Left colon (tissue), 2 donors: ENCODE measurements at regions of chr14 and their contacts with region 1.

Region 1: DNA sequence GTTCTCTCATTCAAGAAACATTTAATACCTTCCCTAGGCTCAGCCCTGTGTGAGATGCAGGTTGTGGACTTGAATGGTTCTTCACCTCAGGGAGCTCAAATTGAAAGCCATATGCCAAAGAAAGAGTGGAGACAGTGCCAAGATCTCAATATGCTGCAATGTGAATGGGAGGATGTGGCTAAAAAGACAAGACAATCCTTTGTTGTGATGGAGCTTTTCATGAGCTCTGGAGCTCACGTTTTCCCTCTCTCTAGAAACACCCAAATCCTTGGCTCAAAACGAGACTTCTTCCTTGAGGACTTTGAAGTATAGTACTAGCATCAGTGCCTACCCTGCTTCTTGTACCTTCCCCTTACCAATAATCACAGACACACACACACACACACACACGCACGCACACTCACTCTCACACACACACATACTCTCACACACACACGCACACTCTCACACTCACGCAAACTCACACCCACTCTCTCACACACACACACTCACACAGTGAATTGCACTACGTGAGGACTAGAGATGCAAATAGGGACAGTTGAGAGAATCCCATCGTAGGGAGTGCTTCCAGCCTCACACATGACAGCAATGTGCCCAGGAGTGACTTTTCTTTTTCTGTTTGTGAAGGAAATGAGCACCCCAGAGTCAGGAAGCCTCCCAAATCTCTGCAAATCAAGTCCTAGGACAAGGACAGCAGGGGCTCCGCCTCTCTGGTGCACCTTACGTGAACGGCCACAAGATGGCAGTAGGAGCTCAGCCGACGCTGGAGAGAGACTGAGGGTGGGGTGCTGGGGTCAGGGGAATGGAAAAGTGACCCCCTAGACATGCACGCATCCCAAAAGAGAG is 231.4 kb downstream of the PCNX1 start:
- DNase-seq: peak in 1 of 2 donors; percentile 66
- ATAC-seq: peak; percentile 84

Region 2: GRCh38 chr14:71290960-71291466 is 152.3 kb after region 1 on chr14:
- intact Hi-C with region 1: no loop called
- DNase-seq: no peak
- ATAC-seq: peak; percentile 51

Region 3: DNA sequence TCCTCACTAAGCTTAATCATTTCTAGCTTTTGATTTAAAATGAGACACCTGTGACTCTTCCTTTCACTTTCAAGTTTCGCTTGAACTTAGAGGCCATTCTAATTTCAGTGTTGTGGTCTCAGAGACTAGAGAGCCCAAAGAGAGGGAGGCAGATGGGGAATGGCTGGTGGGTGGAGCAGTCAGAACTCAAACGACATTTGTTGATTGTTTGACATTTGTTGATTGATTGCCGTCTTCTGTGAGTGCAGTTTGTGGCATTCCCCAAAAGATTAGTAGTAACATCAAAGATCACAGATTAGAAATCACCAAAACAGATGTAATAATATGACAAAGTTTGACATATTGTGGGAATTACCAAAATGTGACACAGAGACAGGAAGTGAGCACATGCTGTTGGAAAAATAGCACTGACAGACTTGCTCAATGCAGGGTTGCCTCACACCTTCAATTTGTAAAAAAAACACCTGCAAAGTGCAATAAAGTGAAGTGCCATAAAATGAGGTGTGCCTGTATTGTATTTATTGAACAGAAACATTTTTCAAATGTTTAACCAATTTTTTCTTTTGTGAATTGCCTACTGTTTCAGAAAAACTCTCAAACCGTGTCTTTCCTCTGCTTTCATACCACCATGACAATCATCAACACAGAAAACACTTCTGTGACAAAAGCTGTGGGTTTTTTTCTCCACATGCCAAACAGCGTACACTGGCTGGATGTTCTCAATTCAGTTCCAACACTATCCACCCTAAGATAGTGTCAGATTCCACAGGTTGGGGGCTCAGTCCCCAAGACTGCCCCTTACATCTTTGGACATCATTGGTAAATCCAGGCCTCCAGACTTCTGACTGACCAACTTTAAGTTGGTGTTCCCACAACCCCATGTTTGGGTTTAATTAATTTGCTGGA is 417.2 kb after region 1 on chr14:
- intact Hi-C with region 1: no loop called
- DNase-seq: peak; percentile 33 to 42
- ATAC-seq: peak; percentile 93

Region 4: GRCh38 chr14:71753126-71753830 is 614.6 kb after region 1 on chr14:
- intact Hi-C with region 1: loop called (anchors 5 to 10 kb)
- DNase-seq: peak; percentile 75 to 92
- ATAC-seq: peak; percentile 92